MCF 10A (cell line): ENCODE measurements at regions of chr17 and their contacts with region 1.

Region 1: DNA sequence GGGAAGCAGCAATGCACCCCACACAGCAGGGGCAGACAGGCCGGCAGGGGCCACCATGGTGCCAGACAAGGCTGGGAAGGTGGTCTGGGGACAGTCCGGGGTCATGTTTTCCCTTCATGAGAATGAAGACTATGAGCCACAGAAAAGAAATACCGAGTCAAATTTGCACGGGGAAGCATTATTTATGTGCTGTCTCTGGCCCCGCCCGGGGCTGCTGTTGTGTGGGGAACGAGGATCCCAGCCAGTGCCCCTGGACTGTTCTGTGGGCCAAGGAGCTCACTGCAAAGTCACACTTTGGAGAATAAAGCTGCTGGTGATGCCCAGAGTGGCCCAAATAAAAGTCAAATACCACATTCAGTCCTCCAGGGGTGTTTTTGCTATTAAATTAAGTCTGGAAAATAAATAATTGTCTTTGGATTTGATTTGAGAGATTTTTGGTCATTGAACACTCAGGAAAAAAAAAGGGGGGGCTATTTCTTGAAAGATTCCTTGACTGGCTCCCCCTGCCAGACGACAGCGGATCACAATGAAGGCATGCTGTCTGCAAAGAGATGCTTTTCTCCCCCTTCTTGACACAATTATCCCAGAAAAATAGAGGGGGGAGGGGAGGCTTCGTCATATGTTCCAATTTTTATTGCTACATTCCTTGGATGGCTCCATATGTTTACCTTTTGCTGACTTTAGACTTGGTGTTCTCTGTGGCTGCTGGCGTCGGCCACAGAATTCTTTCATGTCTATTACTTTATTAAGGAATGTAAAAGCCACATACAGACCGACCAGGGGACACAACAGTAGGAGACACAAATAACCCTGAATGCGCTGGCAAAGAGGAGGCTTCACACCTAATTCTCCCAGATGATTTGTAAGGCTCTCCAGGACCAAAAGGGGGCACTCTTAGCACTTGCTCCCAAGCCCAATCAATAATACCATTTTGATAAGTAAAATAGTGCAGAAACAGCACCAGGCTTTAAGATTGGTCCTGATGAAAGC is 27.1 kb upstream of the ANKFN1 start:
- DNase-seq: peak; percentile 77
- H3K4me3 Mint-ChIP-seq: no peak overlapping the region
- H3K27ac Mint-ChIP-seq: no peak overlapping the region
- H3K4me1 Mint-ChIP-seq: no peaks in the 10 kb centered on the region
- H3K27me3 Mint-ChIP-seq: no peaks in the 10 kb centered on the region
- CTCF ChIP-seq: peak; percentile 73

Region 2: GRCh38 chr17:56142325-56142724 is 16.2 kb after region 1 on chr17:
- CTCF ChIA-PET with region 1: interaction called, 10 read pairs
- POLR2A ChIA-PET with region 1: no interaction called
- intact Hi-C with region 1: no loop called
- DNase-seq: peak; percentile 87
- H3K4me3 Mint-ChIP-seq: no peak overlapping the region
- H3K27ac Mint-ChIP-seq: no peak overlapping the region
- H3K4me1 Mint-ChIP-seq: peaks cover 10% of the 10 kb centered on the region
- H3K27me3 Mint-ChIP-seq: no peaks in the 10 kb centered on the region
- CTCF ChIP-seq: no peak

Region 3: GRCh38 chr17:56269556-56270389 is 143.6 kb after region 1 on chr17:
- CTCF ChIA-PET with region 1: no interaction called
- POLR2A ChIA-PET with region 1: no interaction called
- intact Hi-C with region 1: no loop called
- DNase-seq: no peak
- H3K4me3 Mint-ChIP-seq: no peak overlapping the region
- H3K27ac Mint-ChIP-seq: no peak overlapping the region
- H3K4me1 Mint-ChIP-seq: no peaks in the 10 kb centered on the region
- H3K27me3 Mint-ChIP-seq: no peaks in the 10 kb centered on the region
- CTCF ChIP-seq: no peak

Region 4: DNA sequence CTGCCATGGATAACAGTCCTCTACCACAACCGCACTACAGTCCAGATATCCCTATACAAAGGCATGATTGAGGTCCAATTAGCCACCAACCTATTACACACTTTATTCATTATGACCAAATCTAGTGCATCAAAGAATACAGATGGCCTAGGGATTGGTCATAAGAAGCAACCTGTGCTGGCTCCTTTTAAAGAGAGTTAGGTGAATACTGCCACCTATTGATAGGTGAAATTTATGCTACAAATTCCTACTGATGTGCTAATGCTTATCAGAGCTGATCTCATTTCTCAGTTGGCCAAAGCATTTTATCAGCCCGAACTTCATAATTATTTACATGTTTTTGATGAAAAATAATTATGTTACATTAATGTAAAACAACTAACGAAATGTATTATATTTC is 193.4 kb after region 1 on chr17:
- CTCF ChIA-PET with region 1: interaction called, 73 read pairs
- POLR2A ChIA-PET with region 1: interaction called, 3 read pairs
- intact Hi-C with region 1: loop called (anchors 1 kb)
- DNase-seq: peak; percentile 68
- H3K4me3 Mint-ChIP-seq: no peak overlapping the region
- H3K27ac Mint-ChIP-seq: no peak overlapping the region
- H3K4me1 Mint-ChIP-seq: no peaks in the 10 kb centered on the region
- H3K27me3 Mint-ChIP-seq: peaks cover 12% of the 10 kb centered on the region
- CTCF ChIP-seq: peak; percentile 55

Region 5: GRCh38 chr17:56478836-56479447 is 352.8 kb after region 1 on chr17:
- CTCF ChIA-PET with region 1: interaction called, 18 read pairs
- POLR2A ChIA-PET with region 1: no interaction called
- intact Hi-C with region 1: loop called (anchors 1 kb)
- DNase-seq: peak; percentile 59
- H3K4me3 Mint-ChIP-seq: no peak overlapping the region
- H3K27ac Mint-ChIP-seq: no peak overlapping the region
- H3K4me1 Mint-ChIP-seq: no peaks in the 10 kb centered on the region
- H3K27me3 Mint-ChIP-seq: no peaks in the 10 kb centered on the region
- CTCF ChIP-seq: peak; percentile 43